Endothelial cell of umbilical vein (primary cell): ENCODE measurements at regions of chr4 and their contacts with region 1.

Region 1: GRCh38 chr4:81565142-81565870 is 93.6 kb upstream of the RASGEF1B start:
- DNase-seq: no peak
- H3K4me3 ChIP-seq: no peak overlapping the region
- H3K27ac ChIP-seq: no peak overlapping the region
- H3K4me1 ChIP-seq: no peaks in the 10 kb centered on the region
- H3K27me3 ChIP-seq: no peaks in the 10 kb centered on the region
- CTCF ChIP-seq: no peak
- POLR2A ChIP-seq: no peak

Region 2: DNA sequence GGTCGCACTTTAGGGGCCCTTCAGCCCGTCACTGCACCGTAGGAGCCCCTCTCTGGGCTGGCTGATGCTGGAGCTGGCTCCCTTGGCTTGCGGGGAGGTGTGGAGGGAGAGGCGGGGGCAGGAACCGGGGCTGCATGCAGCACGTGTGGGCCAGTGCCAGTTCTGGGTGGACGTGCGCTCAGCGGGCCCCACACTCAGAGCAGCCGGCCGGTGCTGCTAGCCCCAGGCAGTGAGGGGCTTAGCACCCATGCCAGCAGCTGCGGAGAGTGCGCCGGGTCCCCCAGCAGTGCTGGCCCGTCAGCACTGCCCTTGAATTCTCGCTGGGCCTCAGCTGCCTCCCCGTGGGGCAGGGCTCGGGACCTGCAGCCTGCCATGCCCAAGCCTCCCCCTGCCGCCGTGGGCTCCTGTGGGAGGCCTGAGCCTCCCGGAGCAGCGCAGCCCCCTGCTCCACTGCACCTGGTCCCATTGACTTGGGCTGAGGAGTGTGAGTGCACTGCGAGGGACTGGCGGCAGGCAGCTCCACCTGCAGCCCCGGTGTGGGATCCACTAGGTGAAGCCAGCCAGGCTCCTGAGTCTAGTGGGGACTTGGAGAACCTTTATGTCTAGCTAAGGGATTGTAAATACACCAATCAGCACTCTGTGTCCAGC is 15.2 kb after region 1 on chr4:
- CTCF ChIA-PET with region 1: interaction called, 3 read pairs
- POLR2A ChIA-PET with region 1: no interaction called
- dilution Hi-C with region 1: no loop called
- intact Hi-C with region 1: loop called (anchors 1 kb)
- DNase-seq: no peak
- H3K4me3 ChIP-seq: no peak overlapping the region
- H3K27ac ChIP-seq: no peak overlapping the region
- H3K4me1 ChIP-seq: no peaks in the 10 kb centered on the region
- H3K27me3 ChIP-seq: no peaks in the 10 kb centered on the region
- CTCF ChIP-seq: no peak
- POLR2A ChIP-seq: no peak